Vagina (tissue), 2 donors: ENCODE measurements at regions of chr4 and their contacts with region 1.

Region 1: DNA sequence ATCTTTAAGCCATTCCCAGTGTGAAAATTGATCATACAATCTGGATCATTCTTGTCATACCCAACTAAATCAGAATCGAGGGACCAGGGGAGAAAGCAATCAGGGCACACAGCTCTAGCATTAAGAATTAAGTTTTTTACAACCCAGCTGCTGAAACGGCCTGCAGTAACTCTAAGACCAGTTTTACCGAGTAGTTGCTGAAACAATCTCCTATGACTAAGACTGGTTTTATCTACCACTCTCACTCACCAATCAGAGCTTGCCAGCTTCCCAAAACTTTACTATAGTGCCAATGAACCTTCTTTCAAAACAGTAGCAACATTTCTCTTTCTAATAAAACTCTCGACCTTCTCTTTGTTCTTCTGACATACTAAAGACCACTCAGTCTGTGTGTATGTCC is 2.8 kb upstream of the SAP30 start:
- DNase-seq: no peak
- H3K4me3 ChIP-seq: peak overlapping the region in 1 of 2 donors; percentile 29
- H3K27ac ChIP-seq: no peak overlapping the region
- H3K4me1 ChIP-seq: peaks cover 29% of the 10 kb centered on the region
- H3K27me3 ChIP-seq: no peaks in the 10 kb centered on the region
- CTCF ChIP-seq: no peak
- POLR2A ChIP-seq: no peak

Region 2: GRCh38 chr4:172850838-172851237 is 517.1 kb before region 1 on chr4:
- intact Hi-C with region 1: no loop called
- DNase-seq: no peak
- H3K4me3 ChIP-seq: no peak overlapping the region
- H3K27ac ChIP-seq: no peak overlapping the region
- H3K4me1 ChIP-seq: no peaks in the 10 kb centered on the region
- H3K27me3 ChIP-seq: no peaks in the 10 kb centered on the region
- CTCF ChIP-seq: no peak
- POLR2A ChIP-seq: no peak

Region 3: GRCh38 chr4:173330590-173330989 is 37.4 kb before region 1 on chr4:
- intact Hi-C with region 1: loop called (anchors 2 kb)
- DNase-seq: no peak
- H3K4me3 ChIP-seq: no peak overlapping the region
- H3K27ac ChIP-seq: no peak overlapping the region
- H3K4me1 ChIP-seq: peaks cover 17% of the 10 kb centered on the region
- H3K27me3 ChIP-seq: no peaks in the 10 kb centered on the region
- CTCF ChIP-seq: no peak
- POLR2A ChIP-seq: no peak